SK-N-SH (cell line): ENCODE measurements at regions of chr17 and their contacts with region 1.

Region 1: GRCh38 chr17:57671667-57672632 is 73.1 kb downstream of the CCDC182 start:
- DNase-seq: peak; percentile 94
- H3K4me3 ChIP-seq: peak overlapping the region in 1 of 2 experiments; percentile 9; a peak in 1 of 4 replicates
- H3K27ac ChIP-seq: peak overlapping the region; percentile 5 to 100; a peak in 3 of 4 replicates
- H3K4me1 ChIP-seq: peaks cover 11 to 74% of the 10 kb centered on the region in 2 experiments; a peak in 3 of 4 replicates
- H3K27me3 ChIP-seq: no peaks in the 10 kb centered on the region
- CTCF ChIP-seq: peak; percentile 100
- EP300 ChIP-seq: peak; percentile 32 to 73; a peak in 3 of 4 replicates
- RAD21 ChIP-seq: peak; percentile 95

Region 2: GRCh38 chr17:57541472-57542394 is 130.2 kb before region 1 on chr17:
- CTCF ChIA-PET with region 1: interaction called, 12 read pairs
- POLR2A ChIA-PET with region 1: interaction called, 3 read pairs
- DNase-seq: peak; percentile 76
- H3K4me3 ChIP-seq: peak overlapping the region in 1 of 2 experiments; percentile 10; a peak in 1 of 4 replicates
- H3K27ac ChIP-seq: peak overlapping the region; percentile 65 to 100
- H3K4me1 ChIP-seq: peaks cover 52 to 98% of the 10 kb centered on the region in 2 experiments
- H3K27me3 ChIP-seq: no peaks in the 10 kb centered on the region
- CTCF ChIP-seq: no peak
- EP300 ChIP-seq: peak; percentile 71 to 97; a peak in 3 of 4 replicates
- RAD21 ChIP-seq: peak; percentile 54

Region 3: DNA sequence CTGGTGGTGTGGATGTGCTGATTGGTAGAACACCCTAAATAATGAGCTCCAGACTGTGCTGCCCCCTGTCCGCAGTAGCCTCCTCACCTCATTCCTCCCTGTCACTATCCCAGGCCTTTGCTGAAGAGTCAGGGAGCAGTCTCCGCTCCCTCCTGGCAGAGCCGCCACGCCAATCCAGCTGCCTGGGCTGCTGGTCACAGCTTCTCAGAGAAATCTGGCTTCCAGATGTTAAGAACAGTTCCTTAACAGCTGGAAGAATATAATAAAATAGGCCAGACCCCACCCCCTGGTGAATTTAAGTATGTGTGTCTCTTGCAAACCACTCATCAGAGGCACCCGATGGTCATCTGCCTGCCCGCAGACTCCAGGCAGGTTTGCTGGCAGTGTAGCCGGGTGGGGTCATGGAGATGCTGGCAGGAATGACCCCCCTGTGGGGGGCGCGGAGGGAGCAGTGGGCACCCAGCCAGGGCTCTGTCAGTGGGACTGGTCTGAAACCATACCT is 87.8 kb before region 1 on chr17:
- CTCF ChIA-PET with region 1: interaction called, 24 read pairs
- POLR2A ChIA-PET with region 1: interaction called, 10 read pairs
- DNase-seq: peak; percentile 83
- H3K4me3 ChIP-seq: no peak overlapping the region
- H3K27ac ChIP-seq: peak overlapping the region in 1 of 2 experiments; percentile 100; a peak in 2 of 4 replicates
- H3K4me1 ChIP-seq: peaks cover 13 to 89% of the 10 kb centered on the region in 2 experiments; a peak in 3 of 4 replicates
- H3K27me3 ChIP-seq: no peaks in the 10 kb centered on the region
- CTCF ChIP-seq: no peak
- EP300 ChIP-seq: peak in 1 of 2 experiments; percentile 86; a peak in 1 of 4 replicates
- RAD21 ChIP-seq: peak; percentile 47; the same call in 1 of the 2 replicates

Region 4: GRCh38 chr17:57685505-57686132 is 13.7 kb after region 1 on chr17:
- CTCF ChIA-PET with region 1: interaction called, 20 read pairs
- POLR2A ChIA-PET with region 1: interaction called, 6 read pairs
- DNase-seq: no peak
- H3K4me3 ChIP-seq: no peak overlapping the region
- H3K27ac ChIP-seq: peak overlapping the region in 1 of 2 experiments; percentile 97; a peak in 2 of 4 replicates
- H3K4me1 ChIP-seq: peaks cover 0 to 32% of the 10 kb centered on the region in 2 experiments; a peak in 2 of 4 replicates
- H3K27me3 ChIP-seq: no peaks in the 10 kb centered on the region
- CTCF ChIP-seq: no peak
- EP300 ChIP-seq: no peak
- RAD21 ChIP-seq: no peak

Region 5: DNA sequence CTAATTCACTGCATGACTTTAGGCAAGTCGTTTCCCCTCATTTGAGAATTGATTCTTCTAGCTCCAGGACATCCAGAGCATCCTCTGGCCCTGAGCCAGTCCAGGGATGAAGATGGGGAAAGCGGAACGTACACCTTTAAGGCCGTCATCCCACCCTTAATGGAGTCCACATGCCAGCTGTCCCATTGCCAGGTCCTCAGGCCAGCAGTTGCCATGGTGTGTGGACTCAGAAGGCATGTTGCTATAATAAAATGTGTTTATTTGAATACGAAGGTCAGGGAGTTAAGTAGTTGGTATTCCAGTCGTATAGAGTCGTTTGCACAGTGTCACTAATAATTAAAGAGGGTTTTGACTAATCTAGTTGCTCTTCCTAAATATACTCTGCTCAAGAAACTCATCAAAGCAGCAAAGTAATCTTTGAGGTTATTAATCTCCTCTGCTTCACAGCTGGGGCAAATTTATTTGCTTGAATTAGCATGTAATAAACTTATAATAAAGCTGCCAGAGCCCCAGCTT is 42.8 kb after region 1 on chr17:
- CTCF ChIA-PET with region 1: interaction called, 12 read pairs
- POLR2A ChIA-PET with region 1: no interaction called
- DNase-seq: peak; percentile 41
- H3K4me3 ChIP-seq: no peak overlapping the region
- H3K27ac ChIP-seq: no peak overlapping the region
- H3K4me1 ChIP-seq: peaks cover 0 to 14% of the 10 kb centered on the region in 2 experiments; a peak in 1 of 4 replicates
- H3K27me3 ChIP-seq: peaks cover 33% of the 10 kb centered on the region; the same call in 1 of the 2 replicates
- CTCF ChIP-seq: no peak
- EP300 ChIP-seq: no peak
- RAD21 ChIP-seq: no peak

Region 6: GRCh38 chr17:57868007-57868909 is 196.3 kb after region 1 on chr17:
- CTCF ChIA-PET with region 1: no interaction called
- POLR2A ChIA-PET with region 1: no interaction called
- DNase-seq: peak; percentile 84
- H3K4me3 ChIP-seq: no peak overlapping the region
- H3K27ac ChIP-seq: peak overlapping the region; percentile 86 to 96
- H3K4me1 ChIP-seq: peaks cover 25 to 45% of the 10 kb centered on the region in 2 experiments; a peak in 3 of 4 replicates
- H3K27me3 ChIP-seq: no peaks in the 10 kb centered on the region
- CTCF ChIP-seq: peak; percentile 70
- EP300 ChIP-seq: peak; percentile 62 to 98
- RAD21 ChIP-seq: peak; percentile 40